Head of caudate nucleus (tissue), 42 donors: ENCODE measurements at regions of chr4 and their contacts with region 1.

Region 1: GRCh38 chr4:75673027-75673958 is at the start of gene G3BP2:
- DNase-seq: peak; percentile 93 to 99 (median 98)

Region 2: GRCh38 chr4:75630174-75630936 is 42.9 kb before region 1 on chr4 and contains the start of gene CDKL2:
- intact Hi-C with region 1: loop called (anchors 5 kb)
- DNase-seq: peak; percentile 76 to 95 (median 89)

Region 3: GRCh38 chr4:75724066-75724866 is 51.0 kb after region 1 on chr4 and contains the start of gene USO1:
- intact Hi-C with region 1: loop called (anchors 1 kb)
- DNase-seq: peak; percentile 97 to 100 (median 99)